ENCODE measurements at regions of chr16 and their contacts with region 1.

Region 1: DNA sequence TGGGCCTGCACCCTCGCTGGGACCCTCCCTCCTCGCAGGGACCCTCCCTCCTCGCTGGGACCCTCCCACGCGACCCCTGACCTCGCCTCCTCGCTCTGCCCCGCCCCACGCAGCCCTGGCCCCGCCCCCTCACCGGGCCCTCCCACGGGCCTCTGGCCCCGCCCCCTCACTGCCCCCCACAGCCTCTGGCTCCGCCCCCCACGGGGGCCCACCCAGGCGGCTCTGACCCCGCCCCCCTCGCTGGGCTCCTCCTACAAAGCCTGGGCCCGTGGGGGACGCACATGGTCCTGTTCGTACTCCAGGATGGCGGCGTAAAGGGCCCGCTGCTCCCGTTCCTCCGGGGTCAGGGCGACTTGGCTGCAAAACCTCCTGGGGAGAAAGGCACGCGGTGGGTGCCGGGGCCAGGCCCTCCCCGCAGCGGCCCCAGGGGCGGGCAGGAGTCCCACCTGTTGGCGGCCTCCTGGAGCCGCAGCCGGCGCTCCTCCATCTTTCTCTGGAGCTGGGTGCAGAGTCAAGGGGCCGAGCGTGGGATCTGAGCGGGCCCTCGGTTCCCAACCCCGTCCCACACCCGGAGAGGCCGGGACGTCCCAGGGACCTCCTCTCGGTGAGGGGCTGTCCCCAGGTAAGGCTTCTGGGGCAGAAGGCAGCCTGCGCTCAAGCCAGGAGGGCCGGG is 9.0 kb downstream of the VPS9D1 start:
- DNase-seq: peak in 1 of 4 donors; percentile 84
- ATAC-seq: peak; percentile 87
- H3K4me3 ChIP-seq: peak overlapping the region; percentile 17 to 45
- H3K27ac ChIP-seq: no peak overlapping the region
- H3K4me1 ChIP-seq: peaks cover 9 to 11% of the 10 kb centered on the region in 2 donors
- H3K27me3 ChIP-seq: peaks cover 0 to 16% of the 10 kb centered on the region in 2 donors
- CTCF ChIP-seq: no peak

Region 2: DNA sequence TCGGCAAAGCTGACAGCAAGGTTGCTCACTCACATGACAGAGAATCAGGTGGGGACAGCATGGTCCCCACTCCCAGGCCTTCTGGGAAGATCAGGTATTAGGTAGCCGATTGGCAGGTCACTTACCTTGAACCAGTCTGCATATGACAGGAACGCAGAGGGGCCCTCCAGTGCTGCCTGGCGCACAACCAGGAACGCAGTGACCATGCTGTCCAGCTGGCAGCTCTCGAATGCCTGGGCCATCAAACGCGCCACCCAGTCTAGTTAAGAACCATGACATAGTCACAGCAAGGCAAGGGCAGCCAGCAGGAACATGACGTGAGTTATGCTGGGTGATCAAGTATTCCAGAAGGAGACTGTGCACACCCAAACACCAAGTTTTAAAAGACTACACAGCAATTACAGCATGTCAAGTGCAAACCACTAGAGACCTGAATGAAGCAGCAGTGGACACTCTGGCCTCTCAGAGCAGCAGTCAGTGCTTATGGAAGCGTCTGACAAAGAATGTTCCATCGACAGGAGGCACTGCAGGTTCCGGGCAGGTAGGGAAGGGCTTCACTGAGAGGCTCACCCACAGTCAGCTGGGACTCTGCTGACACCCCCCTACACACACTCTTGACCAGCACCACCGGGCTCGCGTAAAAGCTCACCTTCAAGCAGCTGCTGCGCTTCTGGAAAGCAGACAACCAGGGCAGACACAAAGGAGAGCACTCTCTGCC is 79.7 kb after region 1 on chr16:
- intact Hi-C with region 1: loop called in 1 of 2 experiments (anchors 5 kb)
- DNase-seq: peak in 1 of 4 donors; percentile 41
- ATAC-seq: no peak
- H3K4me3 ChIP-seq: no peak overlapping the region
- H3K27ac ChIP-seq: no peak overlapping the region
- H3K4me1 ChIP-seq: no peaks in the 10 kb centered on the region
- H3K27me3 ChIP-seq: no peaks in the 10 kb centered on the region
- CTCF ChIP-seq: no peak

Region 3: DNA sequence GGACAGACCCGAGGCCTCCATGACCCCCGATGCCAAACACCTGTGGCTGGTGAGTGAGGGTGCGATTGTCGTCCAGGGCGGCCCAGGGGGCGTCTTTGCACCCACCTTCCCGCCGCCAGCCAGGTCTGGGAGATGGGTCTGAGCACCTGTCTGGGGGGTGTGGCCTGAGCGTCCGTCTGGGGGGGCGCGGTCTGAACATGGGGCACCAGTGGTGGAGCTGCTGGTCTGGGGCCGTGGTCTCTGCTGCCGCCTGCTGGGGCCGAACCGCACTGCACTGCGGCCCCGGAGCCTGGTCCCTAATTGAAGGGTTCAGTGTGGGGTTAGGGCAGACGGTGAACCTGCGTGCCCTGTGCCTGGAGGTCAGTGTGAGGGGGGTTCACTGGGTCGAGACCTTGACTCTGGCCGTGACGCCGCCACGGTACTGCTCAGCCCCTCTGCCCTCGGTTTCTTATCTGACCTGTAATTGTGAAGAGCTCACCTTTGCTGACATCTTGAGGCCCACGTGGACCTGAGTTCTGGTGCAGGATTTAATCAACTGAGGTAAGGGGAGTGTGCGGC is 149.1 kb after region 1 on chr16:
- intact Hi-C with region 1: loop called in 1 of 2 experiments (anchors 5 kb)
- DNase-seq: peak in 3 of 4 donors; percentile 60 to 93 (median 67)
- ATAC-seq: peak; percentile 91
- H3K4me3 ChIP-seq: no peak overlapping the region
- H3K27ac ChIP-seq: no peak overlapping the region
- H3K4me1 ChIP-seq: peaks cover 11 to 30% of the 10 kb centered on the region in 2 donors
- H3K27me3 ChIP-seq: no peaks in the 10 kb centered on the region
- CTCF ChIP-seq: peak; percentile 95

Measured in left lung (tissue), 14 donors.